Dorsolateral prefrontal cortex (tissue), 120 donors: ENCODE measurements at regions of chr1 and their contacts with region 1.

Region 1: DNA sequence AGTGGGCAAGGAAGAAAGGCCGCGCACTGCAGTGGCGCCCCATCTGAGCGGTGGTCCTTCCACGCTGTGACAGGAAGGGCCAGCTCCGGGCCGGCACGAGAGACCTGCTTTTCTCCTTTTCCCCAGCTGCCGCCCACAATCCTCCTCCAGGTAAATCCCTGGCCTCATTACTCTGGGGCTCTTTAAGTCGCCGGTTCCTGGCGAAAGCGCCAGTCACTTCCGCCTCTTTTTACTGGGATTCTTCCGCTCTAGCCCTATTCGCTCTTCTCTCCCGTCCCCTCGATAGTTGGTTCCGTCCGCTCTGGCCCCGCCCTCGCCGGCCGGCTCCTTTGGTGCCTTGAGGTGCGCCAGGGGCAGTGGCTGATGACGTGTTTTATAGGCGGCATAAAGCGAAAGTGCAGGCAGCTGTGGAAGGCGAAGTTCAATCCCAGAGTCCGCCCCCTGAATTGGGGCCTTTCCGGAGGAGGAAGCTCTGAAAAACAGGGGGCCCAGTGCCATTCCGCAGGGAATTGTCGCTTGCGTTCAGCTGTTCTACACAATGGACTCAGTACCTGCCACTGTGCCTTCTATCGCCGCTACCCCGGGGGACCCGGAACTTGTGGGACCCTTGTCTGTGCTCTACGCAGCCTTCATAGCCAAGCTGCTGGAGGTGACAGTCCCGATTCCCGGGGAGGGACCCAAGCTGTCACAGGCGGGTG is 26.2 kb downstream of the MIA3 start:
- DNase-seq: peak; percentile 88 to 98 (median 95)
- H3K4me3 ChIP-seq: peak overlapping the region; percentile 69 to 98 (median 90)
- H3K27ac ChIP-seq: peak overlapping the region; percentile 59 to 98 (median 93)
- H3K27me3 ChIP-seq: no peaks in the 10 kb centered on the region
- CTCF ChIP-seq: peak in 32 of 56 donors; percentile 9 to 55 (median 32)

Region 2: GRCh38 chr1:222606757-222607156 is 37.3 kb before region 1 on chr1:
- intact Hi-C with region 1: no loop called
- DNase-seq: no peak
- H3K4me3 ChIP-seq: no peak overlapping the region
- H3K27ac ChIP-seq: no peak overlapping the region
- H3K27me3 ChIP-seq: no peaks in the 10 kb centered on the region
- CTCF ChIP-seq: no peak

Region 3: DNA sequence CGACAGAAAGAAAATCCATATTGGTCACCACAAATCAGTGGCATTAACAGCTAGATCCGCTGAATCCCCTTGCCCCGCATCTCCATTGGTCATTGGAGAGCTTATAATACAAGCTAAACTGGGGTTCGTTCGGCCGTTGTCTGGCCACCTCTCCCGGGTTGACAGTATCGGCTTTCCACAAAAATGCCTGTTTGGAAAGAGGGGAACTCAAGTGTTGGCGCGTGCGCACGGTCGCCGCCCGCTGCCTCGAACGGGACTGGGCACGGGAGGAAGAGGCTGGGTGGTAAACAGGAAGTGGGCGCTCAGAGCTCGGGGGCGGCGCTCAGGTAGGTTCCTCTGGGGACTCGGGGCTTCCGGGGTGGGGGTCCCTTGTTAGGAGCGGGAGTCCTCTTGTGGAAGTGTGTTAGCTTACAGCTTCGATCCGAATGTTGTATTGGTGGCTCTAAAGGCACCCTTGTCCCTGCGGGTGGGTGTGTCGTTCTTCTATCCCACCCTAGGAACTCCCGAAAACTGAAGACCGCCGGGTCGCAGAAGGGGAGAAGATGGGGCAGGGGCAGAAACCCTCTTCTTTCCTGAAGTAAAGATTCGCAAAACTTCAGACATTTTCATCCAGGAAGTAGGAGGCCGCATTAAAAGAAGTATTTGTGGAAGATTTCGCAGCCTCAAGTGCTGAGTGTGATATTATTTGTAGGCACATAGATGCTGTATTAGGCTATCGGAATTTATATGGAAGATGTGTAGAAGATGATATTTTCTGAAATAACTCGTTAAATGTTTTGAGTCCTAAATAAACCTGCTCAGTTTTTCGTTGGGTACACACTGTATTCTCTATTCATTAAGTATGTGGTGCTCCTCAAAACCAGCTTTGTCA is 69.2 kb after region 1 on chr1:
- intact Hi-C with region 1: loop called (anchors 2 to 10 kb)
- DNase-seq: peak; percentile 84 to 94 (median 92)
- H3K4me3 ChIP-seq: peak overlapping the region; percentile 65 to 98 (median 91)
- H3K27ac ChIP-seq: peak overlapping the region; percentile 95 to 100 (median 99)
- H3K27me3 ChIP-seq: no peaks in the 10 kb centered on the region
- CTCF ChIP-seq: peak in 9 of 56 donors; percentile 16 to 27 (median 18)

Region 4: DNA sequence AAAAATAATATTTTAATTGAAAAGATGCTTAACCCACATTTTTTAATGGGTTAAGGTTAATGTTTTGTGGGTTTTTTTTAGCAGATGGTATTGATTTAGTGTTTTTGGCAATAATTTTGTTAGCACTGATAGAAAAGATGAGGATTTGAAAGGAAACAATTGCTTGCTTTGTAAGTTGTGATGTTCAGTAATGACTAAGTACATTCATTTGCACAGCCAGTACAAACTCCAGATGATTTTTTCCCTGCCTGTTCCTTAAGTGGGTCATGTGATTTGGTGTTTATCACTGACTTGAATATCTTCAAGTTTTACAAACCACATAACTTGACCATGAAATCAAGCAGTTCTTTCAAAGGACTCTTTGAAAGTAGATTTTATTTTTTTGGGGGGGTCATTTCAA is 185.8 kb after region 1 on chr1:
- intact Hi-C with region 1: no loop called
- DNase-seq: no peak
- H3K4me3 ChIP-seq: no peak overlapping the region
- H3K27ac ChIP-seq: no peak overlapping the region
- H3K27me3 ChIP-seq: no peaks in the 10 kb centered on the region
- CTCF ChIP-seq: no peak